SK-N-SH (cell line): ENCODE measurements at regions of chr5 and their contacts with region 1.

Region 1: GRCh38 chr5:175873088-175873454 is 1.7 kb downstream of the CPLX2 start:
- DNase-seq: peak; percentile 89
- H3K4me3 ChIP-seq: no peak overlapping the region; a peak in 1 of 4 replicates
- H3K27ac ChIP-seq: no peak overlapping the region
- H3K4me1 ChIP-seq: peaks cover 0 to 12% of the 10 kb centered on the region in 2 experiments; a peak in 1 of 4 replicates
- H3K27me3 ChIP-seq: peaks cover 11% of the 10 kb centered on the region; the same call in 1 of the 2 replicates
- CTCF ChIP-seq: peak; percentile 35; the same call in 1 of the 2 replicates
- EP300 ChIP-seq: no peak
- RAD21 ChIP-seq: peak; percentile 58

Region 2: DNA sequence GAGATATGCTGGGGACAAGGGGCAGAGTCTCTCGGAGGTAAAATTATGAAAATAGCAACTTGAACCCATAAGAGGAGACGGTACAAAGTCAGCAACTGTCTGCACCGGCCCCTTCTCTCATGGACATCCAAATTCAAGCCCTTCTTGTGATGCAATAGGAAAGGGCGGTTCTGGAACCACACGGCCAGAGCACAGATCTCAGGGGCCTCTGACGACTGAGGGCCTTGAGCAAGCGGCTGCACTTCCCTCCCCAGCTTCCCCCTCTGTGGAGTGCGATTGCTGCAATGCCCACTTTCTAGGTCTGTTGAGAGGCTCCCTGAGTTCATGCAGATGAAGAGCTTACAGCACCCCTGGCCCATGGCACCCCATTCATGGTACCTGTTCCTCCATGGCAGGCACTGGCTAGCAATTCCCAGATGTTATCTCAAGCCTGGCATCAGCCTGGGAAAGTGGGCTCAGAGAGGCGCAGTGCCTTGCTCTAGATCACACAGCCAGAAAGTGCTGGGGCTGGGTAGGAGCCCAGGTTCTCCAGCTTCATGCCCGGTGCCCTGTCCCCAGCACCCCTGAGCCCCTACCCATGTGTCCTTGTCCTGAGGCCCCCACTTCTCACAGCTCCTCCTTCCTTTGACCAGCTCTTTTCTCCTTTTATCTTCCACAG is 19.4 kb before region 1 on chr5:
- CTCF ChIA-PET with region 1: interaction called, 22 read pairs
- POLR2A ChIA-PET with region 1: no interaction called
- DNase-seq: no peak
- H3K4me3 ChIP-seq: no peak overlapping the region
- H3K27ac ChIP-seq: no peak overlapping the region; a peak in 2 of 4 replicates
- H3K4me1 ChIP-seq: peaks cover 0 to 20% of the 10 kb centered on the region in 2 experiments; a peak in 1 of 4 replicates
- H3K27me3 ChIP-seq: no peaks in the 10 kb centered on the region
- CTCF ChIP-seq: no peak
- EP300 ChIP-seq: no peak
- RAD21 ChIP-seq: no peak

Region 3: DNA sequence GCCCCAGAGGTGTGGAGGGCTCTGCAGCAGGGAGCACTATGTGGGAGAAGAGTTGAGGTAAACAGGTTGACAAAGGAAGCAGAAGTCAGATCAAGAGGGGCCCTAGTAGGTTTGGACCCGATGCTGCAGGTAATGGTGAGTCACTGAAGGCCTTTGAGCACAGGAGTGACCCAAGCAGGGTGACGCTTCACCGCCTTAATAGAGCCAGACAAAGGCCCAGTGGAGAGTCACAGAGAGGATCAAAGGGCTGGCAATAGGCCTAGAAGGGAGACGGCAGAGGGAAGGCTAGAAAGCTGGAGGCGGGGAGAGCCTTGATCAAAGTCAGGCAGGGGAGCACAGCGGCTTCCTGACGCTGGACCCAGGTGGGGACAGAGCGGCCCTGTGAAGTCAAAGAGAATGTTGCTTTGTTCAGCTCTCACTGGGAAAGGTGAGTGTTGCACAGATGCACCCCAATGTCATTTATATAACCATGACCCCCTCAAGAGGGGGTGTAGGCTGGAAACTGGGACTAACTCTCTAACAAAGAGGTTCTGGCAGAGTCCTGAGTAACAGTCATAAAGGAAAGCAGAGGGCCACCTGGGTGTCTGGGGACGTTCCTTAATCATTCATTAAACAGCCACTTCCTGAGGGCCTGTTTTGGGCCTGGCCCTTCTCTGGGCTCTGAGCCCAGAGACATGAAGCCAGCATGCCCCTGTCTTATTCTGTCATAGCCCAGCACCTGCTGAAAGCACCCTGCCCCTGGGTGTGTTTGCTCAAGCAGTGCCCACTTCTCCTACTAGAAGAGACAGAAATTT is 11.5 kb before region 1 on chr5:
- CTCF ChIA-PET with region 1: interaction called, 18 read pairs
- POLR2A ChIA-PET with region 1: no interaction called
- DNase-seq: peak; percentile 55
- H3K4me3 ChIP-seq: no peak overlapping the region
- H3K27ac ChIP-seq: peak overlapping the region in 1 of 2 experiments; percentile 93; a peak in 2 of 4 replicates
- H3K4me1 ChIP-seq: peaks cover 0 to 25% of the 10 kb centered on the region in 2 experiments; a peak in 1 of 4 replicates
- H3K27me3 ChIP-seq: no peaks in the 10 kb centered on the region
- CTCF ChIP-seq: no peak
- EP300 ChIP-seq: peak in 1 of 2 experiments; percentile 81; a peak in 2 of 4 replicates
- RAD21 ChIP-seq: no peak

Region 4: DNA sequence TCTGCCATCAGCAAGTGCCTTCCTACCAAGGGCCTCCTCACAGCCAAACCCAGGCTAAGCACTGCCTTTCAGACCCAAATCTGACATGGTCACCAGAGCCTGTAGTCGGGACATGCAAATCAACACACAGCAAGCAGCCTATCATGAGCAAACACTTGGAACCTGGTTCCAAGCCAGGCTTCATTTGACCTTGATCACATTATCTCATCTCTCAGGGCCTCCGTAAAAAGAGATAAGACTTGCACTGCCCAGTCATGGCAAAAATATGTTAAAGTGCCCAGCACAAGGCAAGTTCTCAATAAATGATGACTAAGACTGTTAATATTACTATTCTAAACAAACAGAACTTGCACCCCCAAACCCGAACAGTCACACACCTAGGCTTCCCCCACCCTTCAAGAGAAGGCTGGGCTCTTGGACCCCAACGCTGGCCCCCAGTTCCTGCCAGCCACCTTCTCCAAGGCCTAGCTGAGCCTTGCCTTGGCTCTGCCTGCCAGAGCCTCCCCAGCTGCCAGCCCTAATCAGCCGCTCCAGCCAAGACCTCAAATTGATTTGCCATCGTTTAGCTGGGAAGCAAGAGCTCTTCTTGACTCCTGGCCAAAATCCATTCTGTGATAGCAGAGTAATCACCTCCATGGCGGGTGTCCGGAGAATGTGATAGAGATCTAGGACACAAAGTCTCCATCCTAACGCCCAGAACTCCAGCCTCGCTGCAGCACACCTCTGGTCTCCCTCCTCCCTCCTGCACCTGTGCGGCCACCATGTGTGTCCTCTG is 17.0 kb after region 1 on chr5:
- CTCF ChIA-PET with region 1: interaction called, 47 read pairs
- POLR2A ChIA-PET with region 1: interaction called, 3 read pairs
- DNase-seq: peak; percentile 69
- H3K4me3 ChIP-seq: no peak overlapping the region
- H3K27ac ChIP-seq: peak overlapping the region in 1 of 2 experiments; percentile 70; a peak in 2 of 4 replicates
- H3K4me1 ChIP-seq: peaks cover 0 to 31% of the 10 kb centered on the region in 2 experiments; a peak in 1 of 4 replicates
- H3K27me3 ChIP-seq: no peaks in the 10 kb centered on the region
- CTCF ChIP-seq: no peak
- EP300 ChIP-seq: peak in 1 of 2 experiments; percentile 43; a peak in 1 of 4 replicates
- RAD21 ChIP-seq: peak; percentile 10; the same call in 1 of the 2 replicates